Heart right ventricle (tissue), 16 donors: ENCODE measurements at regions of chr14 and their contacts with region 1.

Region 1: GRCh38 chr14:78598041-78598920 is 428.1 kb downstream of the NRXN3 start:
- DNase-seq: peak; percentile 14 to 27
- ATAC-seq: peak; percentile 72 to 89 (median 82)
- H3K4me3 ChIP-seq: no peak overlapping the region
- H3K27ac ChIP-seq: no peak overlapping the region
- H3K4me1 ChIP-seq: no peaks in the 10 kb centered on the region
- H3K27me3 ChIP-seq: peaks cover 0 to 33% (median 0%) of the 10 kb centered on the region in 7 donors
- CTCF ChIP-seq: peak; percentile 75 to 89 (median 83)

Region 2: GRCh38 chr14:78022059-78022458 is 576.2 kb before region 1 on chr14:
- intact Hi-C with region 1: loop called in 1 of 10 experiments (anchors 10 kb)
- DNase-seq: peak; percentile 42 to 54
- ATAC-seq: peak in 2 of 8 donors; percentile 49 to 67
- H3K4me3 ChIP-seq: no peak overlapping the region
- H3K27ac ChIP-seq: no peak overlapping the region
- H3K4me1 ChIP-seq: no peaks in the 10 kb centered on the region
- H3K27me3 ChIP-seq: peaks cover 0 to 9% (median 0%) of the 10 kb centered on the region in 7 donors
- CTCF ChIP-seq: peak in 8 of 9 donors; percentile 43 to 61 (median 58)

Region 3: GRCh38 chr14:78448164-78449094 is 149.9 kb before region 1 on chr14:
- intact Hi-C with region 1: loop called in 1 of 10 experiments (anchors 10 kb)
- DNase-seq: peak in 1 of 2 donors; percentile 36
- ATAC-seq: no peak
- H3K4me3 ChIP-seq: no peak overlapping the region
- H3K27ac ChIP-seq: no peak overlapping the region
- H3K4me1 ChIP-seq: peaks cover 0 to 5% (median 0%) of the 10 kb centered on the region in 9 donors
- H3K27me3 ChIP-seq: peaks cover 0 to 8% (median 0%) of the 10 kb centered on the region in 7 donors
- CTCF ChIP-seq: peak; percentile 29 to 67 (median 60)